ENCODE measurements at regions of chr11 and their contacts with region 1.

Region 1: DNA sequence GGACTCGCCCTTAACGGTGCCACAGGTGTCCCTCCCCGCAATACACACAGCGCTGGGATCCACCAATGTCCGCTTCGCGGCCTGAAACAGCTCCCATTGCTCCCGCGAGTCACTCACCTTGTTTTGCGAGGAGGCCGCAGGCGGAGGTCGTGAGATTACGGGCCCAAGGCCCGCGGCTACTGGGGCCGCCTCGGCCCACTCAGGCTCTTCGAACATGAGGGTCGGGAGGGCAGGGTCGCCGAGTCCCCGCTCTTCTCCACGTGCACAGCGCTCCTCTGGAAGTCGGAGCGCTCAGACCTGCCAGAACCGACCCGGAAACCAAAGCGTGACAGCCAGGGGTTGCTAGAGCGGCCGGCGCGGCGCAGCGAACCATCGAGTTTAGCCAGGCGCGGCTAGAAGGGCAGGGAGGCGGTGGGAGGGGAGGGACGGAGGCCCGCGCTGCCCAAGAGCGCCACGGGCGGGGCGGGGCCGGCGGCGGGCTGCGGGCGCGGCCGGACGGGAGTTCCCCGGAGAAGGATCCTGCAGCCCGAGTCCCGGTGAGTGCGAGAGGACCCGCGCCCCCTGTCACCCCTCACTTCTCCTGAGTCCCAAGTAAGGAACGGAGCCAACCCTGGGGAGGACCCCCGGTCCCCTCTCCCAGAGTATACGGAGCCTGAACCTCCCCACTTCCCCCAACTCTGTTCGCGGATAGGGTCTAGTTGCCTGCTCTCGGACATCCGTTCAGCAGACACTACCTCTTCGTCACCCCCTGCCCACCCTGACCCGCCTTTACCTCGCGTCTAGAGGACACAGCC is at the starts of genes ILK and RRP8:
- DNase-seq: peak; percentile 84
- H3K4me3 Mint-ChIP-seq: no peak within 1 kb of the TSS
- H3K27ac Mint-ChIP-seq: no peak within 1 kb of the TSS
- H3K4me1 Mint-ChIP-seq: peaks cover 38% of the 10 kb centered on the region
- H3K27me3 Mint-ChIP-seq: no peaks in the 10 kb centered on the region
- total RNA-seq, gene ILK: 99.5 and 105 TPM in 2 replicates
- total RNA-seq, gene RRP8: 29.4 and 30.1 TPM in 2 replicates

Region 2: GRCh38 chr11:6481012-6481923 is 122.2 kb before region 1 on chr11 and contains the starts of genes ARFIP2 and TIMM10B:
- intact Hi-C with region 1: loop called (anchors 1 kb)
- DNase-seq: peak; percentile 97
- H3K4me3 Mint-ChIP-seq: peak within 1 kb of the TSS; percentile 88
- H3K27ac Mint-ChIP-seq: peak within 1 kb of the TSS; percentile 93
- H3K4me1 Mint-ChIP-seq: peaks cover 25% of the 10 kb centered on the region
- H3K27me3 Mint-ChIP-seq: no peaks in the 10 kb centered on the region
- total RNA-seq, gene ARFIP2: 46.8 and 48.6 TPM in 2 replicates
- total RNA-seq, gene TIMM10B: 42.9 and 43.0 TPM in 2 replicates

Region 3: DNA sequence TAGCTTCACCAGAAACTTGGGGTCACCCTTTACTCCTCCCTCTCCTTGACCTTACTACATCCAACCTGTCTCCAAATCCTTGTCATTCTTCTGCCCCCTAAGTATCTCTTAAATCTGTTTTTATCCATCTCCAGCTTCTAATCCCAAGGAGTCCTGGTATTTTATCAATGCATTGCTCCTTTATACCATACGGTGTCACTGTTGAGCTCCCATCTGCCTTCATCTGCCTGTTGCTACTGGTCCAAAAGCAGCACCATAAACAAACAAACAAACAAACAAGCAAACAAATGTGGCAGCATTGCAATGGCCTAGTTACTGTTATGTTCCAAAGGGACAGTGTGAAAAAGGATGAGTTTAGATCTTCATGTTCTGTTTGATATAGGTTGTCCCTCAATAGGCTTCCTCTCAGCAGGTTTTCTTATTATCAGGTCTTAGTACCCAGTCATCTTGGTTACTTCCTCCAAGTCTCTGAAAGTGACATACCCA is 72.2 kb before region 1 on chr11:
- intact Hi-C with region 1: loop called (anchors 2 kb)
- DNase-seq: no peak
- H3K4me3 Mint-ChIP-seq: no peak overlapping the region
- H3K27ac Mint-ChIP-seq: no peak overlapping the region
- H3K4me1 Mint-ChIP-seq: peaks cover 12% of the 10 kb centered on the region
- H3K27me3 Mint-ChIP-seq: no peaks in the 10 kb centered on the region

Region 4: DNA sequence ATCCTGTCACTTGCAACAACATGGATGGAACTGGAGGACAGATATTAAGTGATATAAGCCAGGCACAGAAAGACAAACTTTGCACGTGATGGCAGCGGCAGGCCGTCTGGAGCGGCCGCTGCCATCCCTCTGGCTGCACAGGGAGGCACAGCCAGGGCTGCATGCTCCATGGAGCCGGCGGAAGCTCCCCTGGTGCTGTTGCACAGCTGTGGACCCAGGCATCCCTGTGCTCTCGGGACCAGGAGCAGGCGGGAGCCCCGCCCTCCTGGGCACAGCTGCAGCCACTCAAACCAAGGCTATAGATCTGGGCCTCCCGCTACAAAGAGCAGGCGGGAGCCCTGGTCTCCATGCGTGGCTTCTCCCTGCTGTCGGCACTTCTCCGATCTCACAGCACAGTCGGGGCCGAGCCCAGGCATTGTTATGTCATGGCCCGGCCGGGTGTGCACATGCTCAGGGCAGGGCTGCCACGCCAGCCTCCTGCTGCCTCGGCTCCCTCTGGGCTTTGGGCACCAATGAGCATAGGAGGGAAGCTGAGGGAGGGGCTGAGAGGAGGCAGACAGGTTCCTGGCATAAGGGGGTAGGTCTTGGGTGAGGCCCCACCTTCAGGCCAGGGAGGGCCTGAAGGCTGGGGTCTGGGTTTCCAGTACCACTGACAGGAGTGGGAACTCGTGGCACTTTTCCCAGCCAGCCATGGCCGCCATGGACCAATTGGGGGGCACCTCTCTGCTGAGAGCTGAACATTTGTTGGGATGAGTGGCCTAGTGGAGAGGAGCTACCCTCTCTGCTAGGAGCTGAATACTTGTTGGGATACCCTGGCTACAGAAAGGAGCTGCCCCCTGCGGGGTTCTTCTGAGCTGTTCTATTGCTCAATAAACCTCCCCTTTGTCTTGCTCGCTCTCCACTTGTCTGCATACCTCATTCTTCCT is 16.8 kb before region 1 on chr11:
- intact Hi-C with region 1: no loop called
- DNase-seq: no peak
- H3K4me3 Mint-ChIP-seq: no peak overlapping the region
- H3K27ac Mint-ChIP-seq: no peak overlapping the region
- H3K4me1 Mint-ChIP-seq: no peaks in the 10 kb centered on the region
- H3K27me3 Mint-ChIP-seq: no peaks in the 10 kb centered on the region

Region 5: DNA sequence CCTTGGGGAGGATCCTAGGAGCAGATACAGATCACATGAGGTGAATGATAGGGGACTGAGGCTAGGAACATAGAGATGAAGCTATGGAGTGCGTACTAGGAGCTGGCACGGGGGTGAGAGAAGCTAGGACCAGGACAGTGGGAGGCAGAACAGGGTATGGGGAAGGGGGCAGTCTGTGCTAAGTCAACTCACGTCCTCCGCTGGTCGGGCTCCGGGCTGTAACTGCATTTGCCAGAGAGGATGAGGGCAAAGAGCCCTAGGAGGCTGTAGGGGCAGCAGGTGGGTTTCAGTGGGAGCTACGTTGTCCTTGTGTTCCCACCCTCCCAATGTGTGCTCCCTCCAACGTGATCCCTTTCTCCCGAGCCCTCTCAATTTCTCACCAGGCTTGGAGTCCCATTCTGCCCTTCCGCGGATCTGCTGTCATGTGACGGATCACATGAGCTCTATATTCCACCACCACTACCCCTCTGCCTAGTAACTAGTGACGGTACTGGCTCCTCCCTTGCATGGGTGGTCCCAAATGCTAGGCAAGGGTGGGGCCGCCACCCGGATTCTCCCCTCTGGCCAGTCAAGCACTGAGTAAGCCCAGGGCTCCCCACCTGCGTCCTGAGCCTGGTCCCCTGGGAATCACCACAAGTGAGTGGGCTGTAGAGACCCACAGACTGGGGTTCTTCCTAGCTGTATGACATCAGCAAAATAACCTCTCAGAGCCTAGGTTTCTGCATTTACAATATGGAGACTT is 15.7 kb after region 1 on chr11 and contains the start of gene TPP1:
- intact Hi-C with region 1: loop called (anchors 2 kb)
- DNase-seq: peak; percentile 87
- H3K4me3 Mint-ChIP-seq: no peak within 1 kb of the TSS
- H3K27ac Mint-ChIP-seq: no peak within 1 kb of the TSS
- H3K4me1 Mint-ChIP-seq: peaks cover 6% of the 10 kb centered on the region
- H3K27me3 Mint-ChIP-seq: no peaks in the 10 kb centered on the region
- total RNA-seq, gene TPP1: 36.2 and 39.1 TPM in 2 replicates

Region 6: DNA sequence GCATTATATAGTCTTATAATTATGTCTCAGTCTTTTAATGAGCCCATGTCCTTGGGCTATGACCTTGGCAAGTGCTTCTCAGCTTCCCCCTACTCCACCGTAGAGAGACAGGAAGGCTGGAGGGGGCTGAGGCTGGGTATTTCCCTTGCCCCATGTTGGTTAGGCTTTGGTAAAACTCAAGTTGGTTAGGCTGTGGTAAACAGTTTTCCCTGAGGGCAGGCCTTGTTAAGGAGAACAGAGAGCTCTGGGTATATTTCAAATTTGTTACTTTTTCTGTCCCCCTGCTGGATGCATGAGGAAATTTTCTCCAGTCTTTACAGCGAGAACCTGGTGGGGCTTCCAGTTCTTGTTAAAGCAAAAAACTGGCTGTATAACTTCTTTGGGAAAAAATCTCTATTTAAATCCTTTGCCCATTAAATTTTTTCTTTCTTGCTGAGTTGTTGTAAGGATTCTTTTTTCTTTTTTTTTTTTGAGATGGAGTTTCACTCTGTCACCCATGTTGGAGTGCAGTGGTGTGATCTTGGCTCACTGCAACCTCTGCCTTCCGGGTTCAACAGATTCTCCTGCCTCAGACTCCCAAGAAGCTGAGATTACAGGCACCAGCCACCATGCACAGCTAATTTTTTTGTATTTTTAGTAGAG is 64.4 kb after region 1 on chr11:
- intact Hi-C with region 1: loop called (anchors 1 kb)
- DNase-seq: peak; percentile 29
- H3K4me3 Mint-ChIP-seq: no peak overlapping the region
- H3K27ac Mint-ChIP-seq: no peak overlapping the region
- H3K4me1 Mint-ChIP-seq: peaks cover 50% of the 10 kb centered on the region
- H3K27me3 Mint-ChIP-seq: peaks cover 3% of the 10 kb centered on the region

Region 7: DNA sequence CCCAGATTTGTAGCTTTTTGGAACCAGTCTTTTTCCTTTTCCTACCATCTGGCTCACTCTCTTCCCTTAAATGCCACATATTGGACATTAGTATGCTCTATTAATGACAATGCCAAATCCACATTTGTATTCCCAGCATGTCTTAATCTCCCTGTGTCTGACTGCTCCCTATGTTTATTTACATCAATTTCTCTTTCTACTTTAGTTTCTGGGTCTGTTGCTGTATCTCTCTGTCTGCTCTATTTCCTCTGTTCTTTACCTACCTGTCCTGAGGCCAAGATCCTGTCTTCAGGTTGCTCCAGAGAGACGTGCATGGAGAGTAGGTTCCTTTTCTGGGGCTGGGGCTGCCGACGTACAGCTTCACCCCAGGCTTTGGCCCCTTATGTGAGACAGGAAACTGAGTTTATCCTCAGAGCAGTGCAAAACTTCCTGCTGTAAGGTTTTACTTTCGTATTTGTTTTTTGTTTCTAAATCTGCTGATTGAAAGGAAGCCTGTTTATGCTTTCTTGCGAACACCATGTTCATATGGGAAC is 142.7 kb after region 1 on chr11:
- intact Hi-C with region 1: loop called (anchors 2 kb)
- DNase-seq: peak; percentile 49
- H3K4me3 Mint-ChIP-seq: no peak overlapping the region
- H3K27ac Mint-ChIP-seq: no peak overlapping the region
- H3K4me1 Mint-ChIP-seq: peaks cover 24% of the 10 kb centered on the region
- H3K27me3 Mint-ChIP-seq: no peaks in the 10 kb centered on the region